ENCODE measurements at regions of chr2 and their contacts with region 1.

Region 1: GRCh38 chr2:62340994-62341484 is 145.1 kb downstream of the B3GNT2 start:
- DNase-seq: no peak
- ATAC-seq: no peak
- H3K4me3 Mint-ChIP-seq: no peak overlapping the region
- H3K27ac Mint-ChIP-seq: no peak overlapping the region
- H3K4me1 Mint-ChIP-seq: peaks cover 18% of the 10 kb centered on the region
- H3K27me3 Mint-ChIP-seq: no peaks in the 10 kb centered on the region
- CTCF ChIP-seq: no peak

Region 2: GRCh38 chr2:61993444-61994024 is 347.5 kb before region 1 on chr2:
- CTCF ChIA-PET with region 1: interaction called, 3 read pairs
- POLR2A ChIA-PET with region 1: no interaction called
- intact Hi-C with region 1: loop called (anchors 5 kb)
- DNase-seq: no peak
- ATAC-seq: peak; percentile 75
- H3K4me3 Mint-ChIP-seq: no peak overlapping the region
- H3K27ac Mint-ChIP-seq: no peak overlapping the region
- H3K4me1 Mint-ChIP-seq: peaks cover 2% of the 10 kb centered on the region
- H3K27me3 Mint-ChIP-seq: no peaks in the 10 kb centered on the region
- CTCF ChIP-seq: no peak

Region 3: DNA sequence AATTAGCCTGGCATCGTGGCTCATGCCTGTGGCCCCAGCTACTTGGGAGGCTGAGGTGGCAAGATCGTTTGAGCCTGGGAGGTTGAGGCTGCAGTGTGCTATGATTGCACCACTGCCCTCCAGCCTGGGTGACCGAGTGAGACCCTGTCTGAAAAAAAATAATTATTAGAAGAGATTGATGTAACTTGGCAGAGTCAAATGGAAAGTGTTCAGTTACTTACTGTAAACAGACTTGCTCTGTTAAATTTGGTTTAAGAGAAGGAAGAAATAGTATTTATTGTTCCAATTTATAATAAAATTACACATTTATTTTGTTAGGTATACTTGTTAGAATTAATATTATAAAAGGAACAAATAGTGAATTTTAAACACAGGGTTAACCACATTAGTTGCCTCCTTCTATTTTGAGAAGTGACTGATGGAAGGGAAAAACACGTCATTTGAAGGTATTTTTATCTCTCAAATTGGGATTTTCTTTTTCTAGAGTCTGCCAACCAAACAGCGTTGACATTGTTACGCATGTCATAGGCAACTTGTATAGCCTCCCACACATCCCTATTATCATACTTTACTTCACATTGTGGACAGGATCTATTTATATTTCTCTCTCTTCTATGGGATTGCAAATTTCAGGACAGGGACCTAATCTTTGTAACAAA is 263.9 kb before region 1 on chr2:
- CTCF ChIA-PET with region 1: no interaction called
- POLR2A ChIA-PET with region 1: interaction called, 10 read pairs
- intact Hi-C with region 1: no loop called
- DNase-seq: no peak
- ATAC-seq: no peak
- H3K4me3 Mint-ChIP-seq: no peak overlapping the region
- H3K27ac Mint-ChIP-seq: no peak overlapping the region
- H3K4me1 Mint-ChIP-seq: no peaks in the 10 kb centered on the region
- H3K27me3 Mint-ChIP-seq: no peaks in the 10 kb centered on the region
- CTCF ChIP-seq: no peak

Region 4: GRCh38 chr2:62306751-62307468 is 34.1 kb before region 1 on chr2:
- CTCF ChIA-PET with region 1: no interaction called
- POLR2A ChIA-PET with region 1: interaction called, 3 read pairs
- intact Hi-C with region 1: loop called (anchors 5 kb)
- DNase-seq: no peak
- ATAC-seq: peak; percentile 64
- H3K4me3 Mint-ChIP-seq: peak overlapping the region; percentile 42
- H3K27ac Mint-ChIP-seq: peak overlapping the region; percentile 62
- H3K4me1 Mint-ChIP-seq: peaks cover 78% of the 10 kb centered on the region
- H3K27me3 Mint-ChIP-seq: no peaks in the 10 kb centered on the region
- CTCF ChIP-seq: no peak

Region 5: GRCh38 chr2:62505750-62506420 is 164.8 kb after region 1 on chr2 and contains the start of gene TMEM17:
- CTCF ChIA-PET with region 1: no interaction called
- POLR2A ChIA-PET with region 1: no interaction called
- intact Hi-C with region 1: no loop called
- DNase-seq: peak; percentile 31
- ATAC-seq: peak; percentile 65
- H3K4me3 Mint-ChIP-seq: peak within 1 kb of the TSS; percentile 81
- H3K27ac Mint-ChIP-seq: no peak within 1 kb of the TSS
- H3K4me1 Mint-ChIP-seq: peaks cover 8% of the 10 kb centered on the region
- H3K27me3 Mint-ChIP-seq: peaks cover 16% of the 10 kb centered on the region
- CTCF ChIP-seq: no peak
- total RNA-seq, gene TMEM17: 0.12 TPM in 1 of 2 replicates, not detected in the other